ENCODE measurements at regions of chr1 and their contacts with region 1.

Region 1: DNA sequence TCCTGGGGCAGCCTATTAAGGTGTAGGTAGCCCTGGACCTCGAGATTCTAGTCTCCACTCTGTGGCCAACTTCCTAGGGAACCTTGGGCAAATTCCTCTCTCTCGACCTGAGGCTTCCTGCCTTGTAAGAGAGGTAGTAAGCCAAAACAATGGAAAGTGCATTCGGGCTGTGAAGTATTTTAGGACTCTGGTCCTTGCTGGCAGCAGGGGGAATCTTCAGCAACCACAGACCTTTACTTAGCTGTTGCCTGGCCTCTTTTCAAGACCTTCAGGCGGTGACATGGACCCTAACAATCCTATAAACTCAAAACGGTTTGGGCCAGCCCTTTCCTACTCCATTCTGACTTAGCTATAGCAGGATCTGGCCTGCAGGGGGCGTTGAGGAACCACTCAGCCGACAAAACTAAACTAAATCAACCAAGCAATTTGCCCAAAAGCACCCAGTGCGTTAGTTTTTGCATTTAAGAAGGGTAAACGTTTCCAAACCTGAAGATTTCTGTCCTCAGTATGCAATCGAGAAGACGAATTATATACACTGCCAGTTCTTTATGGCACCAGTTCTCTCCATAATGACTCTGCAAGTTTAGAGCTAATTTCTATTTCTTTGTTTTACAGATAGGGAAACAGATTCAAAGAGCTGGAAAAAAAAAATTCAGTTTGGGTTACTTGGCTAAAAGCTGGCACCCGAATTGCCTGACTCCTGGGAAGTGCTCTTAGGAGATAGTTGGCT is 10.9 kb upstream of the SESN2 start:
- DNase-seq: peak; percentile 59 to 77
- ATAC-seq: peak; percentile 18 to 26
- H3K4me3 ChIP-seq: peak overlapping the region; percentile 28 to 40 (median 38)
- H3K27ac ChIP-seq: peak overlapping the region; percentile 94 to 99 (median 95)
- H3K4me1 ChIP-seq: peaks cover 39 to 40% of the 10 kb centered on the region in 2 donors
- H3K27me3 ChIP-seq: no peaks in the 10 kb centered on the region
- CTCF ChIP-seq: peak; percentile 86 to 96 (median 91)
- POLR2A ChIP-seq: no peak

Region 2: DNA sequence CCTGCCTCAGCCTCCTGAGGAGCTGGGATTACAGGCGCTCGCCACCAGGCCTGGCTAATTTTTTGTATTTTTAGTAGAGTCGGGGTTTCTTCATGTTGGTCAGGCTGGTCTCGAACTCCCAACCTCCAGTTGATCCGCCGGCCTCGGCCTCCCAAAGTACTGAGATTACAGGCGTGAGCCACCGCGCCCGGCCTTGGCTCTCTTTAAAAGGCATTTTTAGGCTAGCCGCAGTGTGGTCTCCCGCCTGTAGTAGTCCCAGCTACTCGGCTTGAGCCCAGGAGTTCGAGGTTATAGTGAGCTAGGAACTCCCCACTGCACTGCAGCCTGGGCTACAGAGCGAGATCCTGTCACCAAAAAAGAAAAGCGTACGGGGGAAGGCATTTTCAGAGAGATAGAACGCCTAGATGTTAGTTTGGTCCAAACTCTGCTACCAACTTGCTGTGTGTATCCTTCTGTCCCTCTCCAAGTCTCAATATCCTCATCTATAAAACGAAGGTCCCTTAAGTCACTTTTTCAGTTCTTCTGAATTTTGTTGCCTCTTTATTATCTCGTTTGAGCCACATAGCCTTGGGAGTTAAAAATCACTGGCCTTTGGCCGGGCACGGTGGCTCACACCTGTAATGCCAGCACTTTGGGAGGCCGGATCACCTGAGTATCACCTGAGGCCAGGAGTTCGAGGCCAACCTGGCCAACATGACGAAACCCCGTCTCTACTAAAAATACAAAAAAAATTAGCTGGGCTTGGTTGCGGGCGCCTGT is 81.1 kb after region 1 on chr1:
- in situ Hi-C with region 1: loop called in 1 of 4 experiments (anchors 5 kb)
- intact Hi-C with region 1: loop called (anchors 1 kb)
- DNase-seq: peak in 1 of 2 donors; percentile 13
- ATAC-seq: no peak
- H3K4me3 ChIP-seq: peak overlapping the region; percentile 68 to 84 (median 82)
- H3K27ac ChIP-seq: peak overlapping the region; percentile 85 to 94 (median 89)
- H3K4me1 ChIP-seq: peaks cover 14 to 17% of the 10 kb centered on the region in 2 donors
- H3K27me3 ChIP-seq: no peaks in the 10 kb centered on the region
- CTCF ChIP-seq: no peak
- POLR2A ChIP-seq: no peak

Region 3: GRCh38 chr1:28369371-28370238 is 121.2 kb after region 1 on chr1 and contains the start of gene PHACTR4:
- in situ Hi-C with region 1: no loop called
- intact Hi-C with region 1: loop called (anchors 2 kb)
- DNase-seq: peak; percentile 87 to 93
- ATAC-seq: peak; percentile 95 to 97
- H3K4me3 ChIP-seq: peak within 1 kb of the TSS; percentile 75 to 92 (median 86)
- H3K27ac ChIP-seq: peak within 1 kb of the TSS; percentile 88 to 95 (median 93)
- H3K4me1 ChIP-seq: peaks cover 9 to 16% of the 10 kb centered on the region in 2 donors
- H3K27me3 ChIP-seq: no peaks in the 10 kb centered on the region
- CTCF ChIP-seq: no peak
- POLR2A ChIP-seq: peak; percentile 88 to 90
- total RNA-seq, gene PHACTR4: 9.1 to 17.7 (median 13.4) TPM

Region 4: GRCh38 chr1:28505406-28506187 is 257.1 kb after region 1 on chr1 and contains the start of gene RCC1:
- in situ Hi-C with region 1: loop called in 2 of 4 experiments (anchors 10 kb)
- intact Hi-C with region 1: loop called (anchors 5 kb)
- DNase-seq: peak; percentile 96 to 98
- ATAC-seq: peak; percentile 96 to 97
- H3K4me3 ChIP-seq: peak within 1 kb of the TSS; percentile 67 to 83 (median 75)
- H3K27ac ChIP-seq: peak within 1 kb of the TSS; percentile 78 to 93 (median 86)
- H3K4me1 ChIP-seq: peaks cover 41 to 48% of the 10 kb centered on the region in 2 donors
- H3K27me3 ChIP-seq: no peaks in the 10 kb centered on the region
- CTCF ChIP-seq: no peak
- POLR2A ChIP-seq: peak; percentile 90 to 94
- total RNA-seq, gene RCC1: 6.1 to 24.5 (median 13.7) TPM

Region 5: GRCh38 chr1:28540651-28541050 is 292.2 kb after region 1 on chr1:
- in situ Hi-C with region 1: no loop called
- intact Hi-C with region 1: no loop called
- DNase-seq: no peak
- ATAC-seq: no peak
- H3K4me3 ChIP-seq: no peak overlapping the region
- H3K27ac ChIP-seq: no peak overlapping the region
- H3K4me1 ChIP-seq: no peaks in the 10 kb centered on the region
- H3K27me3 ChIP-seq: no peaks in the 10 kb centered on the region
- CTCF ChIP-seq: no peak
- POLR2A ChIP-seq: no peak

Region 6: DNA sequence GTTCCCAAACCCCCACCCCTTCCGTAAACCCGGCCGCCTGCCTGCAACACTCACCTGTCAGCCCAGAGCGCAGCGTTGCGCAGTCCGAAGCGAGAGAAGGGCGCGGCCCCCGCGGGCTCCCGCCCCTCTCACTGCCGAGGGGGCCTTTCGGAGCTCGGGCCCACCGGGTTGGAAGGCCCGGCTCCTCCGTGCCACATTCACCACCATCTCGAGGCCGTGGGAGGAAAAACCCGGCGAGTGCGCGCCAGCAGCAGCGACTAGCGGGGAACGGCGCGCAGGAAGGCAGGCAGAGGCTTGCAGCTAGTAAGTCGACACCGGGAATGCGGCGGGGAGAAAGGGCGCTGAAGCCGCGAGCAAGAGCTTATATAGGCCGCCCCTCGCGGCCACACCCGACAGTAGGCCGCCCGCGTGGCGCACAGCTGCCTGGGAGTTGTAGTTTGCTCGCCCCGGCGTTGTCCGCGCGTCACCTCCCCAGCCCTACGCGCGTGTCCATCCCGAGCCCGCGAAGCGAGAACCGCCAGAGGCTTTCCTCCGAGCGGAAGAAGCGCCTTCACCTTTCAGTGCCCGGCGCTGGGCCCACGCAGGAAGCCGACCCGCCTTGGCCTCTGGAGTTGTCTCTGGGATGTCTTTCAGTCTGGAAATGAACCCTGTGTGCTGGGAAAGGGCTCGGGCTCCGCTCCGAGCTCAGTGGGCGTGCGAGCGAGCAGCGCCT is 333.2 kb after region 1 on chr1:
- in situ Hi-C with region 1: no loop called
- intact Hi-C with region 1: loop called (anchors 5 kb)
- DNase-seq: peak; percentile 95
- ATAC-seq: peak; percentile 92 to 96
- H3K4me3 ChIP-seq: peak overlapping the region; percentile 76 to 95 (median 88)
- H3K27ac ChIP-seq: peak overlapping the region; percentile 89 to 94 (median 91)
- H3K4me1 ChIP-seq: peaks cover 23 to 25% of the 10 kb centered on the region in 2 donors
- H3K27me3 ChIP-seq: no peaks in the 10 kb centered on the region
- CTCF ChIP-seq: peak in 4 of 5 experiments; percentile 22 to 42 (median 30)
- POLR2A ChIP-seq: peak; percentile 96 to 99

Region 7: DNA sequence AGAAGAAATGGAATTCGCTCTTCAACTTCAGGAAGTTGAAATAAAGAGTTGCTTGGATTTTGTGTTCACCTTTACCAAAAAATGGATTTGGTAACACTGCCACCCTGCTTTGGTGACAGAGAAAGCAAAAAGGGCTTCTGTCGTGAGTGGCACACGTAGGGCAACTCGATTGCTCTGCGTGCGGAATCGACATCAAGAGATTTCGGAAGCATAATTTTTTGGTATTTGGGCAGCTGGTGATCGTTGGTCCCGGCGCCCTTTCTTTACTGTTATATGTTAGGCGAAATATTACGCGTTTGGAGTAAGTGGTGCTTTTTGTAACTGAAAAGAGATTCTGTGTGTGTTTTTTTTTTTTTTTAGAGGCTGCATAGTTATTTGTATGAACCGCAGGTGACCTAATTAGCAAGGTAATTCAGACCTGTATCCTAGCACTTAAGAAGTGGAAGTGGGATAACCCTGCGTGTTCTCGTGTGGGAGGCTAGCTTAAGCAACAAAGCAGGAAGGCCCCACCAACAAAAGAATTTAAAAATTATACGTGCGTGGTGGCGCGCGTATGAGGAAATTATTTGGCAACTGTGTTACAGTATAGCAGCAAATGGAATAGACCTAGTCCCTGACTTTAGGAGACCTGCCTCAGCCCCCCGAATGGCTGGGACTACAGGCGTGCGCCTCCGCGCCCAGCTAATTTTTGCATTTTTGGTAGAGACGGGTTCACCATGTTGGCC is 400.2 kb after region 1 on chr1 and contains the start of gene RNU11:
- in situ Hi-C with region 1: no loop called
- intact Hi-C with region 1: loop called (anchors 5 kb)
- DNase-seq: peak; percentile 85 to 92
- ATAC-seq: peak; percentile 83 to 84
- H3K4me3 ChIP-seq: peak within 1 kb of the TSS; percentile 53 to 60 (median 56)
- H3K27ac ChIP-seq: peak within 1 kb of the TSS; percentile 90 to 96 (median 94)
- H3K4me1 ChIP-seq: peaks cover 18 to 29% of the 10 kb centered on the region in 2 donors
- H3K27me3 ChIP-seq: no peaks in the 10 kb centered on the region
- CTCF ChIP-seq: peak in 1 of 5 experiments; percentile 7
- POLR2A ChIP-seq: peak; percentile 99 to 100
- total RNA-seq, gene RNU11: not detected